ENCODE measurements at regions of chr14 and their contacts with region 1.

Region 1: GRCh38 chr14:106803379-106803778 is 1277.0 kb downstream of the TMEM121 start:
- DNase-seq: no peak
- H3K4me3 Mint-ChIP-seq: no peak overlapping the region
- H3K27ac Mint-ChIP-seq: no peak overlapping the region
- H3K4me1 Mint-ChIP-seq: no peaks in the 10 kb centered on the region
- H3K27me3 Mint-ChIP-seq: peaks cover 23% of the 10 kb centered on the region
- CTCF ChIP-seq: no peak

Region 2: DNA sequence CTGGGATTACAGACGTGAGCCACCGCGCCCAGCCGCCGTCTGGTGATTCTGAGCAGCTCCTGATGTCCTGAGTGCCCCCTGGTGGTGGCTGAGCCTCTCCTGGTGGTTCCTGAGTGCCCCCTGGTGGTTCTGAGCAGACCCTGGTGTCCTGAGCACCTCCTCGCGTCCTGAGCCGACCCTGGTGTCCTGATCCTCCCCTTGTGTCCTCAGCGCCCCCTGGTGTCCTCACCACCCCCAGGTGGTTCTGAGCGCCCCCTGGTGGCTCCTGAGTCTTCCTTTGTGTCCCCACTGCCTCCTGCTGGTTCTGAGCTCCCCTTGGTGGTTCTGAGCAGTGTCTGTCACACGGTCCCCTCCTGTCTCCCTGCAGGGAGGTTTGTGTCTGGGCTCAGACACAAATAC is 27.9 kb after region 1 on chr14:
- CTCF ChIA-PET with region 1: interaction called, 10 read pairs
- intact Hi-C with region 1: no loop called
- DNase-seq: peak; percentile 23
- H3K4me3 Mint-ChIP-seq: no peak overlapping the region
- H3K27ac Mint-ChIP-seq: peak overlapping the region; percentile 67
- H3K4me1 Mint-ChIP-seq: peaks cover 15% of the 10 kb centered on the region
- H3K27me3 Mint-ChIP-seq: no peaks in the 10 kb centered on the region
- CTCF ChIP-seq: peak; percentile 33

Measured in Calu3 (cell line).